GM10248 (cell line): ENCODE measurements at regions of chr2 and their contacts with region 1.

Region 1: GRCh38 chr2:23824777-23825212 is 102.1 kb downstream of the ATAD2B start:
- DNase-seq: peak; percentile 55
- CTCF ChIP-seq: peak; percentile 70

Region 2: GRCh38 chr2:23475036-23475435 is 349.8 kb before region 1 on chr2:
- CTCF ChIA-PET with region 1: no interaction called
- POLR2A ChIA-PET with region 1: no interaction called
- DNase-seq: no peak
- CTCF ChIP-seq: no peak

Region 3: GRCh38 chr2:23803965-23804542 is 20.7 kb before region 1 on chr2:
- CTCF ChIA-PET with region 1: interaction called, 16 read pairs
- POLR2A ChIA-PET with region 1: no interaction called
- DNase-seq: no peak
- CTCF ChIP-seq: peak; percentile 12

Region 4: DNA sequence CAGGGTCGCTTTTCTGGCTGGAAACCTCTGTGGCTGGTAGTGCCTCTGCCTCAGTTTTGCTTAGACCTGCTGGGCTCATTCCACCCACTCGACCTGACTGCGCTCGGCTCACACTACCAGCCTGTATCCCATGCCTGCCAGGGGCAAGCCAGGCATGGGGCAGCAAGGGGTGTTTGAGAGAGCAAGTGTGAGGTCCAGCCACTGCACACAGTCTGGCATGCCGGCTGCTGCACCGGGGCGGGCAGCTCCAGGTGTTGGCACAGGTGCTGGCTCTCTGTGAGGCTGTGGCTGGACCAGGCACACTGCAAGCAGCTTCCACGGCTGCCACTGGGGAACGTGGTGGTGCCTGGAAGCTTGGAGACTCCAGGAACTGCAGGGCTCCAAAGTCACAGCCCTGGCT is 11.2 kb after region 1 on chr2:
- CTCF ChIA-PET with region 1: interaction called, 61 read pairs
- POLR2A ChIA-PET with region 1: no interaction called
- DNase-seq: no peak
- CTCF ChIP-seq: no peak

Region 5: GRCh38 chr2:23926750-23927571 is 102.2 kb after region 1 on chr2 and contains the start of gene ATAD2B:
- CTCF ChIA-PET with region 1: interaction called, 35 read pairs
- POLR2A ChIA-PET with region 1: interaction called, 5 read pairs
- DNase-seq: peak; percentile 93
- CTCF ChIP-seq: peak; percentile 93

Region 6: DNA sequence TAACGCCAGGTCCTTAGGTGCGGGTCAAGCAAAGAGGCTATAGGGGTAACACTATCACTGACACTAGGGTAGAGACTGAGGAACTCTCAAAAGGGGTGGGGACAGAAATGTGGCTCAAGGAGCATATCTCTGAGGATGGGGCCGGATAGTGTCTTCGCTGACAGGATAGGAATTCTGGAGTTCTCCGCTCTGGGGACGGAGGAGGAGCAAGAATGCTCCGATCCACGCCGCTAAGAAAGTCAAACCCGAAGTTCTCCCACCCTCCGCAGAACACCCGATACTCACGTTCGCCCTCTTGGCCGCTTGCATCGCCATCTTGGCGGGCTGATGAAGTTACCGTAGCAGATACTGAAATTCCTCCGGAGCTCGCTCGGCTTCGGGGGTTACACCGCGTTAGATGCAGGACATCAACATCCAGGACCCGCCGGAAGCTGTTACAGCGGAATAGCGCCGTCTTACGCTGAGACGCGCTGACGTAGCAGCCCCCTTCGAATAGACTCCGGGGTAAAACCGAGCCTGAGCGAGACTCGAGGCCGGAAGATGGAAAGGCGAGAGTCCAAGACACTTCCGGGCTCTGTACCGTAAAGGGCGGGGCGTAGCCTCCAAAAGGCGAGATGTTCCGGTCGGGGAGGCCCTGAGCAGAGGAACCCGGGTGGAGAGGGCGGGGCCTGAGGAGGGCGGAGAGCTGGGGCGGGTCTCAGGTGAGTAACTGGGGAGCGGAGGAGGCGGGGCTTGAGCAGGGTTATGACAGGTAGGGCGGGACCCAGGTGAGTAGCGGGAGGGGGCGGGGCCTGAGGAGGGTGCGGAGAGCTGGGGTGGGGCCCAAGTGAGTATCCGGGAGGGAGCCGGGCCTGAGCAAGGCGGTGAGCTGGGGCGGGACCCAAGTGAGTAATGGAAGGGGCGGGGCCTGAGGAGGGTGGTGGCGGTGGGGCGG is 251.4 kb after region 1 on chr2 and contains the start of gene SF3B6:
- CTCF ChIA-PET with region 1: interaction called, 10 read pairs
- POLR2A ChIA-PET with region 1: no interaction called
- DNase-seq: peak; percentile 95
- CTCF ChIP-seq: no peak